ENCODE measurements at regions of chr3 and their contacts with region 1.

Region 1: GRCh38 chr3:118618247-118619040 is 416.2 kb downstream of the IGSF11 start:
- DNase-seq: peak in 2 of 10 donors; percentile 23 to 37
- H3K4me3 ChIP-seq: no peak overlapping the region
- H3K27ac ChIP-seq: no peak overlapping the region
- H3K27me3 ChIP-seq: no peaks in the 10 kb centered on the region
- CTCF ChIP-seq: no peak

Region 2: GRCh38 chr3:118011910-118012309 is 606.5 kb before region 1 on chr3:
- intact Hi-C with region 1: loop called (anchors 5 to 10 kb)
- DNase-seq: no peak
- H3K4me3 ChIP-seq: no peak overlapping the region
- H3K27ac ChIP-seq: no peak overlapping the region
- H3K27me3 ChIP-seq: no peaks in the 10 kb centered on the region
- CTCF ChIP-seq: no peak